Gastrocnemius medialis (tissue), 4 donors: ENCODE measurements at regions of chr14 and their contacts with region 1.

Region 1: GRCh38 chr14:32939254-32940065 is 781 bp downstream of the NPAS3 start:
- DNase-seq: peak; percentile 63 to 65
- ATAC-seq: peak; percentile 60 to 73
- H3K4me3 ChIP-seq: peak overlapping the region; percentile 61 to 72 (median 70)
- H3K27ac ChIP-seq: peak overlapping the region; percentile 66 to 82 (median 74)
- H3K4me1 ChIP-seq: peaks cover 9 to 16% of the 10 kb centered on the region in 2 donors
- H3K27me3 ChIP-seq: peaks cover 4 to 34% (median 12%) of the 10 kb centered on the region in 3 donors
- CTCF ChIP-seq: no peak
- POLR2A ChIP-seq: no peak

Region 2: DNA sequence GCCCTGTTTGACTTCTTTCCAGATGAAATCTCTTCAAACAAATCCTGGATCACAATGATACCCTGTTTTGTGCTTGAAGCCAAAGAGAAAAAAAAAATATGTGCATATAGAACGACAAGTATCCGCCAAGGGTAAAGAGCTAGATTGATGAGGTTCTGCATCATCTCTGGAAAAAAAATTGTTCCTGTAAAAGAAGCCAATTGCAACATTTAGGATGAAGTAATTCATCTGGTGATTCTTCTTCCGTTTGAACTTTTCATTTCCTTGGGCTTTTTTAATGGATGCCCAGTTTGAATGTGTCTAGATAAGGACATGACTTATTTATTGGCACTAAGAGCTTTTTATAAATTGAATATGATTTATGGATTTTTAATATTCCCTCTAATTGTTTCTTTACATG is 38.9 kb before region 1 on chr14:
- in situ Hi-C with region 1: no loop called
- intact Hi-C with region 1: loop called (anchors 2 kb)
- DNase-seq: no peak
- ATAC-seq: no peak
- H3K4me3 ChIP-seq: no peak overlapping the region
- H3K27ac ChIP-seq: no peak overlapping the region
- H3K4me1 ChIP-seq: peaks cover 0 to 5% of the 10 kb centered on the region in 2 donors
- H3K27me3 ChIP-seq: no peaks in the 10 kb centered on the region
- CTCF ChIP-seq: no peak
- POLR2A ChIP-seq: no peak